Sigmoid colon (tissue), 7 donors: ENCODE measurements at regions of chr1 and their contacts with region 1.

Region 1: DNA sequence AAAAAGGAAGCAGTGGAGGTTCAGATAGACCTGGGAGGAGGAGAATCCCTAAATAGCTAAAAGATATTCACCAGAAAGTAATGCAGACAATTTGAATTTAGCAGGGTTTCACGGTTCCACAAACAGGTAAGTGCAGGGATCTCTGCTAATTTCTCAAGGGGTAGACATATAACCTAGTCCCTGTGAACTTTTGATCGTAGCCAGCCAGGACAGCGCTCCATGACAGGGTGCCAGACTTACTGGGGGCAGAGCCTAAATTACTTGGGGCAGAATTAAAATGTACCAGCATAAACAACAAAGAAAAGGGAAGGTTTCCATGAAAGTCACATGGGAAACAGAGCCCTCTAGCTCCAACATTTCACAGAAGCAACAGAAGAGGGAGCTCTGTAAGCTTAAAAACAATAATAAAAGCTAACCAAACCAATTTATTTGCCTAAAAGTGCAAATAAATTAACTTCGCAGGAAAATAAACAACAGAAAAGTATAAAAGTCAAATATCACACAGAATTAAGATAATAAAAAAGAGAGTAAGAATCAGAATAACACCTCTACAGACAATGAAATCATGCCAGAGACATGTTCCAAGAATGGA is 198.3 kb downstream of the DUSP10 start:
- DNase-seq: no peak
- H3K4me3 ChIP-seq: no peak overlapping the region
- H3K27ac ChIP-seq: no peak overlapping the region
- H3K4me1 ChIP-seq: peaks cover 0 to 9% (median 6%) of the 10 kb centered on the region in 4 donors
- H3K27me3 ChIP-seq: no peaks in the 10 kb centered on the region
- CTCF ChIP-seq: peak in 3 of 4 experiments; percentile 28 to 59 (median 31)
- EP300 ChIP-seq: no peak
- POLR2A ChIP-seq: no peak

Region 2: GRCh38 chr1:222171005-222171404 is 627.4 kb after region 1 on chr1:
- intact Hi-C with region 1: loop called (anchors 10 kb)
- DNase-seq: no peak
- H3K4me3 ChIP-seq: no peak overlapping the region
- H3K27ac ChIP-seq: no peak overlapping the region
- H3K4me1 ChIP-seq: no peaks in the 10 kb centered on the region
- H3K27me3 ChIP-seq: no peaks in the 10 kb centered on the region
- CTCF ChIP-seq: peak; percentile 33 to 56 (median 41)
- EP300 ChIP-seq: no peak
- POLR2A ChIP-seq: no peak

Region 3: GRCh38 chr1:222455188-222455879 is 911.7 kb after region 1 on chr1:
- intact Hi-C with region 1: loop called (anchors 10 kb)
- DNase-seq: peak; percentile 93
- H3K4me3 ChIP-seq: peak overlapping the region in 2 of 4 donors; percentile 15 to 22
- H3K27ac ChIP-seq: peak overlapping the region; percentile 31 to 64 (median 42)
- H3K4me1 ChIP-seq: peaks cover 0 to 14% (median 11%) of the 10 kb centered on the region in 4 donors
- H3K27me3 ChIP-seq: no peaks in the 10 kb centered on the region
- CTCF ChIP-seq: peak; percentile 79 to 90 (median 87)
- EP300 ChIP-seq: no peak
- POLR2A ChIP-seq: no peak